CD4-positive, alpha-beta memory T cell (primary cell): ENCODE measurements at regions of chr7 and their contacts with region 1.

Region 1: GRCh38 chr7:151936207-151936606 is 20.0 kb upstream of the GALNTL5 start:
- DNase-seq: peak in 4 of 5 donors; percentile 60 to 76 (median 68)
- H3K4me3 ChIP-seq: peak overlapping the region in 1 of 2 donors; percentile 8
- H3K4me3 Mint-ChIP-seq: peak overlapping the region; percentile 78 to 94 (median 87)
- H3K27ac ChIP-seq: peak overlapping the region; percentile 54
- H3K27ac Mint-ChIP-seq: peak overlapping the region; percentile 85 to 99 (median 98)
- H3K4me1 ChIP-seq: peaks cover 15% of the 10 kb centered on the region
- H3K4me1 Mint-ChIP-seq: peaks cover 16 to 23% (median 21%) of the 10 kb centered on the region in 4 donors
- H3K27me3 ChIP-seq: no peaks in the 10 kb centered on the region
- H3K27me3 Mint-ChIP-seq: no peaks in the 10 kb centered on the region

Region 2: DNA sequence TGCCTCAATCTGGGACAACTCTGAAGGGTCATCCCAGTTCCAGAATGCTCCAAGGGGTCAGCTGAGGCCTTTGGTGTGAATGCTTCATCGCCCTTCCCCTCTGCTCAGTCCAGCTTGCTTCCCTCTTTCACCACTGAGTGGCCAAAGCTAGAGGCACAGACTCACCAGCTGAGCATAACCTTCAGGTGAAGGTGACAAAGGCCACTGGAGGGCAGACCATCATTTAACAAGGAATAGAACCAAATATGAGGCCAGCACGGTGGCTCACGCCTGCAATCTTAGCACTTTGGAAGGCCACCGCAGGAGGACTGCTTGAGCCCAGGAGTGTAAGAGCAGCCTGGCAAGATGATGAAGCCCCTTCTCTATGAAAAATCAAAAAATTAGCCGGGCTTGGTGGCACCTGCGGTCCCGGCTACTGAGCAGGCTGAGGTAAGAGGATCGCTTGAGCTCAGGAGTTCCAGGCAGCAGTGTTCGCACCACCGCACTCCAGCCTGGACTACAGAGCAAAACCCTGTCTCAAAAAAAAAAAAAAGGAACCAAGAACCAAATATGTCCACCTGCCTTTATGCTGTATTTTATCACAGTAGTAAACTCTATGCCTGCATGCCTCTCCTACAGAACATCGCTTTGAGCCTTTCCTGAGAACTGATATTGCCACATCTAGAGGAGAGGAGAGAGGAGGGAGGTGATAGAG is 72.7 kb before region 1 on chr7:
- CTCF ChIA-PET with region 1: no interaction called
- POLR2A ChIA-PET with region 1: no interaction called
- intact Hi-C with region 1: loop called (anchors 5 kb)
- DNase-seq: no peak
- H3K4me3 ChIP-seq: no peak overlapping the region
- H3K4me3 Mint-ChIP-seq: no peak overlapping the region
- H3K27ac ChIP-seq: no peak overlapping the region
- H3K27ac Mint-ChIP-seq: peak overlapping the region in 1 of 7 donors; percentile 41
- H3K4me1 ChIP-seq: no peaks in the 10 kb centered on the region
- H3K4me1 Mint-ChIP-seq: peaks cover 7 to 59% (median 19%) of the 10 kb centered on the region in 4 donors
- H3K27me3 ChIP-seq: no peaks in the 10 kb centered on the region
- H3K27me3 Mint-ChIP-seq: no peaks in the 10 kb centered on the region